ENCODE measurements at regions of chr3 and their contacts with region 1.

Region 1: GRCh38 chr3:63993653-63994079 is 29.6 kb downstream of the PSMD6 start:
- DNase-seq: peak; percentile 63
- ATAC-seq: peak; percentile 92
- H3K4me3 Mint-ChIP-seq: no peak overlapping the region
- H3K27ac Mint-ChIP-seq: peak overlapping the region; percentile 23
- H3K4me1 Mint-ChIP-seq: peaks cover 29% of the 10 kb centered on the region
- H3K27me3 Mint-ChIP-seq: no peaks in the 10 kb centered on the region

Region 2: DNA sequence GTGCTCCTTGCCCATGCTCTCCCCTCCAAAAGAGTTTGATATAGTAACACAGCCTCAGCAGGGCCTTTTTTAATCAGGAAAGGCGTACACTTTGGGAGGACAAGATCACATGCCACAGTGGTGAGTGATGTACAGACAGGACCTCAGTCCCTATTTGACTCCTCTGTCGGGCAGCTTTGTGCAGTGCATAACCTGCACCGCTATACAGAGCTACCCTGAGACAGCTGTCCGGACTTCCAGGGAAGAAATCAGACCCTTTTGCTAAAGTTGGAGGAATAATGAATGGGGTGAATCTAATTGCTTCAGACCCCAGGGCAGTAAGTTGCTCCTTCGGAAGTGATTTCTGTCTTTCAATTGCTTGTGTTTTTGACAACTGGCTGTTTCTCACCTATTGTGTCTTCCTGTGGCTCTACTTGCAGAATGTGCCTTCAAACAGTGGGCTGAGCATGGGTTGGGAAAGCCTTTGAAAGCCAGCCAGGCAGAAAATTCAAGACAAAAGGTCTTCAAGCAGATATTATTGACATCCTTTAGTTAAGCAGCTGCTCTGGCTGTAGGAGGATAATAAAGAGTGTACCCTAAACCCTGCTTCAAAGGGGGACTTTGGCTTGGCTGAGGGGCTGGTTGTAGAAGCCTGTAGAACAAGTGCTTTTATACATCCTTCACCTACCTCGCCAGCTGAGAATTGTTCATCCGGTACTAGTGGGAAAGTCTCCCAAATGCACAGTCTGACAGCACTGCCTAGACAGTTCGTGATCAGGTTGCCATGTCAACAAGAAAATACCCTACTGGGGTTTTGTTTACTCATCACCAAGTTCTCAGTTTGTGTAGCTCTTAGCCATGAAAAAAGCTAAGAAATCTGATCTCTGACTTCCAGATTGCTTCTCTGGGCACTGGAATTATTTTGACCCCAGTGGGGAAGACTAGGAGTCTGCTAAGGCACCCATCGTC is 306.1 kb before region 1 on chr3:
- CTCF ChIA-PET with region 1: no interaction called
- POLR2A ChIA-PET with region 1: no interaction called
- DNase-seq: no peak
- ATAC-seq: no peak
- H3K4me3 Mint-ChIP-seq: no peak overlapping the region
- H3K27ac Mint-ChIP-seq: no peak overlapping the region
- H3K4me1 Mint-ChIP-seq: no peaks in the 10 kb centered on the region
- H3K27me3 Mint-ChIP-seq: no peaks in the 10 kb centered on the region

Region 3: DNA sequence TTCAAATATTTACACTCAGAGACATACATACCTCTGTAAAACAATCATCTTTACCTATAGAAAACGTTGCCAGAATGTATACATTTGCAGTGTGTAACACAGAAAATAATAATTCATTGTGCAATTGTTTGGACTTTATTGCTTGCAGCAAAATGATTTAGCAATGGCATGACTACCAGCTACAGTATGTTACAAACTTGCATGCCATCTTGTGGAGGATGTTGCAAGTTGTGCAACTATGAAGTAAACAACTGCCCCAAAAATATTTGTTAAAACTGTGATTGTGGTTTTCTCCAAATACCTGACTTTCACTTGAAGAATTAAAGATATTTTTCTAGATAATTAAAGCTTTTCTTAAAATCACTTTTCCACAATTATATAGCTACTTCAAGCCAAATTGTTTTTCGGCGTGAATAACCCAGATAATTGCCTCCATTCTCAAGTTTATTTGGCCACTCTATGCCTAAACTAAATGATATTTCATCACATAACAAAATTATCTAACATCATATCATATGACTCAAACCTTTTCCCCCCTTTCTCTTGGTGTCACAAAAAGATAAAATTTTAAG is 201.6 kb before region 1 on chr3:
- CTCF ChIA-PET with region 1: no interaction called
- POLR2A ChIA-PET with region 1: no interaction called
- DNase-seq: no peak
- ATAC-seq: no peak
- H3K4me3 Mint-ChIP-seq: no peak overlapping the region
- H3K27ac Mint-ChIP-seq: no peak overlapping the region
- H3K4me1 Mint-ChIP-seq: no peaks in the 10 kb centered on the region
- H3K27me3 Mint-ChIP-seq: no peaks in the 10 kb centered on the region

Region 4: GRCh38 chr3:63809607-63810006 is 184.1 kb before region 1 on chr3:
- CTCF ChIA-PET with region 1: no interaction called
- POLR2A ChIA-PET with region 1: no interaction called
- DNase-seq: no peak
- ATAC-seq: no peak
- H3K4me3 Mint-ChIP-seq: no peak overlapping the region
- H3K27ac Mint-ChIP-seq: no peak overlapping the region
- H3K4me1 Mint-ChIP-seq: no peaks in the 10 kb centered on the region
- H3K27me3 Mint-ChIP-seq: no peaks in the 10 kb centered on the region

Region 5: GRCh38 chr3:63845215-63845614 is 148.5 kb before region 1 on chr3:
- CTCF ChIA-PET with region 1: no interaction called
- POLR2A ChIA-PET with region 1: no interaction called
- DNase-seq: no peak
- ATAC-seq: no peak
- H3K4me3 Mint-ChIP-seq: no peak overlapping the region
- H3K27ac Mint-ChIP-seq: no peak overlapping the region
- H3K4me1 Mint-ChIP-seq: no peaks in the 10 kb centered on the region
- H3K27me3 Mint-ChIP-seq: no peaks in the 10 kb centered on the region

Region 6: DNA sequence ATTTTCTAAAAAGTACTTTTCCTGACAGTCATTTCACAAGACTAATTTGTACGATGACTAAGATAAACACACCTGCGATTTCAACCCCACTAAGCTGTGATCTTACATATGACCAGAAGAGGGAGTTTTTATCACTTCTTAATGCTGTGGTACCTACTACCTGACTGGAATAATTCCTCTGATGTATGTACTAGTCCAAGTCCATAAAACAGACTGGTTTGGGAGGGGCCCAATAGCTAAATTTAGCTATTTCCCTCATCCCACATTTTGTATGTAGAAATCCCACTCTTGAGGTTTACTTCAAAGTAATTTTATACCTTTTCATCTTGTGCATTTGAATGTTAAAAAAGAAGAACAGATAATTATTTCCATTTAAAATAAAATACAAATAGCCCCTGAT is 31.8 kb before region 1 on chr3:
- CTCF ChIA-PET with region 1: interaction called, 143 read pairs
- POLR2A ChIA-PET with region 1: interaction called, 6 read pairs
- DNase-seq: no peak
- ATAC-seq: peak; percentile 87
- H3K4me3 Mint-ChIP-seq: no peak overlapping the region
- H3K27ac Mint-ChIP-seq: no peak overlapping the region
- H3K4me1 Mint-ChIP-seq: peaks cover 47% of the 10 kb centered on the region
- H3K27me3 Mint-ChIP-seq: no peaks in the 10 kb centered on the region

Region 7: DNA sequence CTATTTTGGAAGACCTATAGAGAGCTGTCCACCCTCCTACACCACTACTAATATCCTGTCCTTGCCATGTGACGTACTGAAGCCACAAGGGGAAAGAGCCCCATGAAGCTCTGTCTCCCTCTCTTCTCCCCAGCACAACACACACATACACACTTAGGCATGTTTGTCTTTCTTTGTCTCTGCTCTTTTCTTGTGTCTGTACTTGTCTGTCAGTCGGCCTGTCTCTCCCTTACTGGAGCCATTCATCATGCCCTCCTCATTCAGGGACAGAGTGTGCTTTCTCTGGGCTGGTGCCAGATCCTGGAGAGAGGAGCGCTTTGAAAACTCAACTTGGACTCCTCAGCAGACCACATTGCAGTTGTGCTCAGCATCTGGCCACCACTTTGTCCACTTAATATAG is 17.9 kb before region 1 on chr3:
- CTCF ChIA-PET with region 1: interaction called, 143 read pairs
- POLR2A ChIA-PET with region 1: no interaction called
- DNase-seq: no peak
- ATAC-seq: no peak
- H3K4me3 Mint-ChIP-seq: no peak overlapping the region
- H3K27ac Mint-ChIP-seq: peak overlapping the region; percentile 4
- H3K4me1 Mint-ChIP-seq: peaks cover 84% of the 10 kb centered on the region
- H3K27me3 Mint-ChIP-seq: no peaks in the 10 kb centered on the region

Region 8: DNA sequence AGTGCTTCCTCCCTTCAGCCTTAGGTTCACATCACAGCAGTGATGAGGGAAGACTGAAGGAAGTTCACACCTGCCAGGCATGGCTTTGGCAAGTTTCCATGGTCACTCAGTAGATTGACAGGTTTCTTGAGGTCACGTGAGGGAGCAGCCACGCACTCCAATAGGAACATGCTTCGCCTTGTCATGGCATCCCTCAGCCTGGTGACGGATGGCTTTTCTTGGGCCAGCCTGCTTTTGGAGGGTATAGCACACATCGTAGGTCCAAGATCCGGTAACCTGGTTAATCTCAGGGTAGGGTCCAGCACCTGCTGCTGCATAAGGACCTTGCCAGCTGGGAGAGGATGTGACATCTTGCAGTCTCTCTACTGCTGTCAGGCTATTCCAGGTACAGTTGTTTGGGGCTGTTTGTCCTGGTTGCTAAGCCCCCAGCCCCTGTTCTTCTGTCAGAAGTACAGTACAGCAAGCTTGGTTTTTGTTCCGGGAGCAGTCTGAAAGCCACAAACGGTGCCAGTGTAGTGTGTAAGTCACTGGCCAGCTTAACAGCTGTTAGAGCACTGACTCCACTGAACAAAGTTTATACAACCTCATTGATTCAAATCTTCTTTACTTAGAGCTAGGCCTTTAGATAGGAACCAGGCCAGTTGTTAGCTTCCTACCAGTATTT is 12.7 kb before region 1 on chr3:
- CTCF ChIA-PET with region 1: interaction called, 84 read pairs
- POLR2A ChIA-PET with region 1: no interaction called
- DNase-seq: no peak
- ATAC-seq: no peak
- H3K4me3 Mint-ChIP-seq: no peak overlapping the region
- H3K27ac Mint-ChIP-seq: no peak overlapping the region
- H3K4me1 Mint-ChIP-seq: peaks cover 72% of the 10 kb centered on the region
- H3K27me3 Mint-ChIP-seq: no peaks in the 10 kb centered on the region

Region 9: DNA sequence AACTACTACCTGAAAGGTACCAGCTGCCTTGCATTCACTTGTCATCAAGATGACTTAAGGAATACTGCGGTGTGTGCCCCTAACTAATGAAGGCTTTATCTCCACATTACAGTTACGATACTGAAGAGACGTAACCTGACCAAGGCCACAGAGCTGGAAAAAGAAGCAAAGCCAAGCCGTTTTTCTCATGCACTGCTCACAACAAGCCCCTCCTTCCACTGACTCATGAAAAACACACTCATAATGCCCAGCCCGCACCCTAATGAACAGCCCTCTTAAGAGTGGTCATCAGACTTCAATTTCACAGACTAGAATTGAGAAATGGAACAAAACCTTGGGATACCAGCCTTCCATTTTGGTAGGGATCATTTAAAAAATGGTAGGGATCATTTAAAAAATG is 18.0 kb after region 1 on chr3:
- CTCF ChIA-PET with region 1: interaction called, 18 read pairs
- POLR2A ChIA-PET with region 1: interaction called, 5 read pairs
- DNase-seq: no peak
- ATAC-seq: no peak
- H3K4me3 Mint-ChIP-seq: no peak overlapping the region
- H3K27ac Mint-ChIP-seq: no peak overlapping the region
- H3K4me1 Mint-ChIP-seq: peaks cover 7% of the 10 kb centered on the region
- H3K27me3 Mint-ChIP-seq: no peaks in the 10 kb centered on the region

Measured in activated CD8-positive, alpha-beta T cell treated with anti-CD3 and anti-CD28 coated beads, Interleukin-2, amount 10 ng/mL, durations not matched to agents 7 days and 5 days (primary cell).